Caco-2 (cell line): ENCODE measurements at regions of chr1 and their contacts with region 1.

Region 1: GRCh38 chr1:180033390-180033789 is 78.8 kb downstream of the CEP350 start:
- DNase-seq: no peak
- H3K4me3 ChIP-seq: no peak overlapping the region
- H3K4me3 Mint-ChIP-seq: no peak overlapping the region
- H3K27ac Mint-ChIP-seq: no peak overlapping the region
- H3K4me1 ChIP-seq: no peaks in the 10 kb centered on the region
- H3K4me1 Mint-ChIP-seq: no peaks in the 10 kb centered on the region
- H3K27me3 ChIP-seq: no peaks in the 10 kb centered on the region
- H3K27me3 Mint-ChIP-seq: no peaks in the 10 kb centered on the region
- CTCF ChIP-seq: no peak

Region 2: GRCh38 chr1:179954493-179955297 is 78.7 kb before region 1 on chr1 and contains the start of gene CEP350:
- CTCF ChIA-PET with region 1: no interaction called
- POLR2A ChIA-PET with region 1: no interaction called
- intact Hi-C with region 1: loop called (anchors 10 kb)
- DNase-seq: peak; percentile 98 to 99
- H3K4me3 ChIP-seq: peak within 1 kb of the TSS; percentile 73
- H3K4me3 Mint-ChIP-seq: peak within 1 kb of the TSS; percentile 83
- H3K27ac Mint-ChIP-seq: peak within 1 kb of the TSS; percentile 30
- H3K4me1 ChIP-seq: 0 out of 2 replicates have a peak, but pooled peaks cover 8% of the 10 kb centered on the region
- H3K4me1 Mint-ChIP-seq: peaks cover 14% of the 10 kb centered on the region
- H3K27me3 ChIP-seq: no peaks in the 10 kb centered on the region
- H3K27me3 Mint-ChIP-seq: no peaks in the 10 kb centered on the region
- CTCF ChIP-seq: no peak
- total RNA-seq, gene CEP350: 40.3 and 43.5 TPM in 2 replicates

Region 3: GRCh38 chr1:180080433-180080832 is 47.0 kb after region 1 on chr1:
- CTCF ChIA-PET with region 1: no interaction called
- POLR2A ChIA-PET with region 1: no interaction called
- intact Hi-C with region 1: no loop called
- DNase-seq: no peak
- H3K4me3 ChIP-seq: no peak overlapping the region
- H3K4me3 Mint-ChIP-seq: no peak overlapping the region
- H3K27ac Mint-ChIP-seq: no peak overlapping the region
- H3K4me1 ChIP-seq: no peaks in the 10 kb centered on the region
- H3K4me1 Mint-ChIP-seq: no peaks in the 10 kb centered on the region
- H3K27me3 ChIP-seq: no peaks in the 10 kb centered on the region
- H3K27me3 Mint-ChIP-seq: no peaks in the 10 kb centered on the region
- CTCF ChIP-seq: no peak